ENCODE measurements at regions of chr20 and their contacts with region 1.

Region 1: DNA sequence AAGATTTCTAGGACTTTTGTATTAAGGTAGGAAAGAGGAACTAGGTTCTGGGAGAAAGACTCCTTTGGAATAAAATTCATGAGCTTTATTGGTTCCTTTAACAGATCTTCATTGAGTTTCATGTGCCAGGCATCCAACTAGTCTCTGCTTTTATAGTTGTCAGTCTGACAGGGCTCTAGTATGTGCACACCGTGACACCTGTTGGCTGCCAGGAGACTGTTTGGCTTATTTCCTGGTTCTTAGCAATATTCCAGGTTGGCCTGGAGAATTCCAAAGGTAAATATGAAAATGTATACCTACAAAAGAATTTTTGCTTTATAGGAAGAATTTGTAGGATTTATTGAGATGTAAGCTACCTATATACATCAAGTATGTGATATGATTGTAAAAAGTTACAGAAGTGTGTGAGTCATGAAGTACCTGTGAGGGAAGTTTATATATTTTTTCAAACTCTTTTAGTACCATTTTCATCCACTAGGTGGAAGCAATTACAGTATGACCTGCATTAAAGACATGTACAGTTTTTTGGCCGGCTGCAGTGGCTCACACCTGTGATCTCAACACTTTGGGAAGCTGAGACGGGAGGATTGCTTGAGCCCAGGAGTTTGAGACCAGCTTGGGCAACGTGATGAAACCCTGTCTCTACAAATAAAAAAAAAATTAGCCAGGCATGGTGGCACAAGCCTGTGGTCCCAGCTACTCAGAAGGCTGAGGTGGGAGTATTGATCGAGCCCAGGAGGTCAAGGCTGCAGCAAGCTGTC is 35.2 kb downstream of the NDUFAF5 start:
- DNase-seq: peak; percentile 28
- ATAC-seq: peak; percentile 67
- H3K4me3 Mint-ChIP-seq: no peak overlapping the region
- H3K27ac Mint-ChIP-seq: no peak overlapping the region
- H3K4me1 Mint-ChIP-seq: peaks cover 26% of the 10 kb centered on the region
- H3K27me3 Mint-ChIP-seq: no peaks in the 10 kb centered on the region

Region 2: GRCh38 chr20:13581452-13581851 is 238.6 kb before region 1 on chr20:
- CTCF ChIA-PET with region 1: no interaction called
- POLR2A ChIA-PET with region 1: no interaction called
- intact Hi-C with region 1: no loop called
- DNase-seq: no peak
- ATAC-seq: no peak
- H3K4me3 Mint-ChIP-seq: no peak overlapping the region
- H3K27ac Mint-ChIP-seq: no peak overlapping the region
- H3K4me1 Mint-ChIP-seq: no peaks in the 10 kb centered on the region
- H3K27me3 Mint-ChIP-seq: no peaks in the 10 kb centered on the region

Region 3: DNA sequence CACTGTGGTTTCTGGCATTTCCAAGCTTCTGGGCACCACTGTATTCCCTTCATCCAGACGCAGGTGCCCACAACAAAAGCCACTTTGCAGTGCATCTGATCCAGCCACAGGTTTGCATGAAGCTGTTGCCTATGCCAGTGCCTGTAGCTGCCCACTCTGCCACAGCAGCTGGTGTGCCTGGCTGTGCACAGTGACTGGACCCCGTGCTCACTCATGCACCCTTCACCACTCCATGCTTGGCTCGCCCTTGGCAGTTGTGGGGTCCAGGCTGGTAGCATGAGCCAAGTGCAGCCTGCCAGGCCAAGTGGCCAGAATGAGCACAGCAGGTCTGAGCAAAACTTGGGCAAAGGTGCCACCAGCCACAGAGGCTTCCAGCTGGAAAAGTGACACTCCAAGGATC is 127.7 kb after region 1 on chr20:
- CTCF ChIA-PET with region 1: interaction called, 3 read pairs
- POLR2A ChIA-PET with region 1: no interaction called
- intact Hi-C with region 1: loop called in 1 of 2 experiments (anchors 10 kb)
- DNase-seq: no peak
- ATAC-seq: no peak
- H3K4me3 Mint-ChIP-seq: no peak overlapping the region
- H3K27ac Mint-ChIP-seq: no peak overlapping the region
- H3K4me1 Mint-ChIP-seq: no peaks in the 10 kb centered on the region
- H3K27me3 Mint-ChIP-seq: no peaks in the 10 kb centered on the region

Region 4: GRCh38 chr20:14055127-14055742 is 235.2 kb after region 1 on chr20:
- CTCF ChIA-PET with region 1: interaction called, 19 read pairs
- POLR2A ChIA-PET with region 1: no interaction called
- intact Hi-C with region 1: loop called (anchors 1 kb)
- DNase-seq: peak; percentile 9
- ATAC-seq: no peak
- H3K4me3 Mint-ChIP-seq: no peak overlapping the region
- H3K27ac Mint-ChIP-seq: no peak overlapping the region
- H3K4me1 Mint-ChIP-seq: no peaks in the 10 kb centered on the region
- H3K27me3 Mint-ChIP-seq: peaks cover 2% of the 10 kb centered on the region